Upper lobe of right lung (tissue), 1 donor: ENCODE measurements at regions of chr7 and their contacts with region 1.

Region 1: GRCh38 chr7:107879400-107880035 is 11.5 kb upstream of the DLD start:
- DNase-seq: no peak
- ATAC-seq: peak; percentile 82
- H3K4me3 ChIP-seq: no peak overlapping the region
- H3K27ac ChIP-seq: no peak overlapping the region
- H3K4me1 ChIP-seq: peaks cover 12% of the 10 kb centered on the region
- H3K27me3 ChIP-seq: no peaks in the 10 kb centered on the region
- CTCF ChIP-seq: peak; percentile 78

Region 2: GRCh38 chr7:107726356-107727140 is 153.0 kb before region 1 on chr7:
- intact Hi-C with region 1: no loop called
- DNase-seq: no peak
- ATAC-seq: no peak
- H3K4me3 ChIP-seq: no peak overlapping the region
- H3K27ac ChIP-seq: no peak overlapping the region
- H3K4me1 ChIP-seq: no peaks in the 10 kb centered on the region
- H3K27me3 ChIP-seq: peaks cover 9% of the 10 kb centered on the region
- CTCF ChIP-seq: no peak

Region 3: GRCh38 chr7:107743567-107744344 is 135.8 kb before region 1 on chr7 and contains the start of gene CBLL1:
- intact Hi-C with region 1: loop called (anchors 10 kb)
- DNase-seq: peak; percentile 98
- ATAC-seq: peak; percentile 98
- H3K4me3 ChIP-seq: peak within 1 kb of the TSS; percentile 82
- H3K27ac ChIP-seq: peak within 1 kb of the TSS; percentile 95
- H3K4me1 ChIP-seq: peaks cover 33% of the 10 kb centered on the region
- H3K27me3 ChIP-seq: no peaks in the 10 kb centered on the region
- CTCF ChIP-seq: peak; percentile 65
- total RNA-seq, gene CBLL1: 22.8 TPM